Panc1 (cell line): ENCODE measurements at regions of chr13 and their contacts with region 1.

Region 1: DNA sequence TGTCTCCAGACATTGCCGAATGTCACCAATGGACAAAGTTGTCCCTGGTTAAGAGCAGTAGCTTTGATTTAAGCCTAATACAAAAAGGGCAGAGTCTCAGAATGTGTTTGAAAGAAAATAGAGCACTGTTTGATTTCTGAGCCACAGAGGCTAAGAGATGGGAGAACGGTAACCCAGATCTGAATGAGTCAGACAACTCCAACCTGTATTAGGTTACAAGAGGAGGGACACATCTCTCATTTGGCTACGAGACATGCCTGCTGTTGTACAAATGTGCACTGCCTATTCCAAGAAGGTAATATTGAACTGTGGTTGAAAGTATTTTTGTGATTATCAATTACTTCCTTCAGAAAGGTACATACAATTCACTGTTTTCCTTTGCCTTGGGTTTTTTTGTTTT is 4.9 kb upstream of the HSPH1 start:
- DNase-seq: no peak
- ATAC-seq: no peak
- H3K4me3 ChIP-seq: no peak overlapping the region
- H3K27ac ChIP-seq: no peak overlapping the region
- H3K4me1 ChIP-seq: peaks cover 6% of the 10 kb centered on the region; the same call in 1 of the 2 replicates
- H3K27me3 ChIP-seq: no peaks in the 10 kb centered on the region
- CTCF ChIP-seq: no peak

Region 2: GRCh38 chr13:31038834-31039552 is 127.6 kb before region 1 on chr13:
- CTCF ChIA-PET with region 1: no interaction called
- POLR2A ChIA-PET with region 1: no interaction called
- in situ Hi-C with region 1: no loop called
- intact Hi-C with region 1: no loop called
- DNase-seq: no peak
- ATAC-seq: no peak
- H3K4me3 ChIP-seq: no peak overlapping the region
- H3K27ac ChIP-seq: no peak overlapping the region
- H3K4me1 ChIP-seq: no peaks in the 10 kb centered on the region
- H3K27me3 ChIP-seq: no peaks in the 10 kb centered on the region
- CTCF ChIP-seq: no peak

Region 3: DNA sequence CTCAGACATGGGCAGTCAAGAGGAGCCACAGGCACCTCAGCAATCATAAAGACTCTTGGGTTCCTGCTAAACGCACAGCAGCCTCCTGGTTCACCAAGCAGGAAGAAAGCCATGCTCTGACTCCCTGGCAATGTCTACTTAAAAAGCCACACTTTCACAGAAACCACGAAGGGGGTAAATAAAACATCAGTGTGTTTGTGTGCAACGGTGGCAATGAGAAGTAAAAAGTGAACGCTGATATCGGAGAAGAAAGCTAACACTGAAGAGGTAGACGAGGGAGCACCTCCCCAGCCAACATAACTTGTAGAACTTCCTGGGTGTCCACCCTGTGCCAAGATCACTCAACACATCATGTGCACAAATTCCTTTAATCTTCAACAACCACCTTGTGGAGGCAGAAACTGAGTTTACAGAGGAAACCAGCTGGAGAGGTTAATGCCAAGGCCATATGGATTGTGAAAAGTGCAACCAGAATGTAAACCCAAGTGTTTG is 35.1 kb before region 1 on chr13:
- CTCF ChIA-PET with region 1: no interaction called
- POLR2A ChIA-PET with region 1: interaction called, 12 read pairs
- in situ Hi-C with region 1: no loop called
- intact Hi-C with region 1: no loop called
- DNase-seq: no peak
- ATAC-seq: no peak
- H3K4me3 ChIP-seq: no peak overlapping the region
- H3K27ac ChIP-seq: no peak overlapping the region
- H3K4me1 ChIP-seq: no peaks in the 10 kb centered on the region
- H3K27me3 ChIP-seq: no peaks in the 10 kb centered on the region
- CTCF ChIP-seq: no peak